ENCODE measurements at regions of chr5 and their contacts with region 1.

Region 1: DNA sequence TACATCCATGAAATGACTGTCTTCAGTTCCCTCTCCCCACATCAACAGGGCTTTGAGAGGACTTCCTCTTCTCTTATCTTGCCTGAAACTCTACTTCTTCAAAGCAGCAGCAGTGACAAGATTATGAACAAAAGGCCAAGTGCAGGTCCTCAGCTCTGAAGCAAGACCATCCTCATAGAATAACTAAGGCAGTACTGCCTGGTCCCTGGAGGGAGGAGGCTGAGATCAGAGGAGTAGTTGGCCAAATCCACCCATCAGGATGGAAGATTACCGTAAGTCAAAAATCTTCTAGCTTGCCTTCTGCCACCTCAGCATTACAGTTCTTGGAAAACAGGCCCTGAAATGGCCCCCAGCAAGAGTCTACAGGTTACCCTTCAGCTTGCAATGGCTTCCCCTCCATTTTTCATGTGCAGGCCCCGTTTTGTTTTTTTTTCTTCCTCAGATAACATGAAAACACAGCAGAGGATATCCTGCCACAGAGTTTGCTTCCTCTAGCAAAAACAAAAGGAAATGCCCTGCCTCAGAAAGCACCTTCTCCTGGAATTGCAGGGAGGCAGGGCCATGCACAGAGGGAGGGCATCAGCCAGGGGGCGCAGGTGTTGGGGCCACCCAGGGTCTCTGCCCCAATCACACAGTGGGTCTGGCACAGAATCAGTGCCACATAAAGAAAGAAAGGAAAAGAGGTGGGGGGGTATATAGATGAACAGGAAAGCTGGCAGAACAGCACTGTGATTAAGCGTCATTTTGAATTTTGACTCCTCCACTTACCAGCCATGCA is 40.0 kb downstream of the KLHL3 start:
- DNase-seq: no peak
- H3K4me3 ChIP-seq: no peak overlapping the region
- H3K27ac ChIP-seq: no peak overlapping the region
- H3K4me1 ChIP-seq: peaks cover 3% of the 10 kb centered on the region
- H3K27me3 ChIP-seq: no peaks in the 10 kb centered on the region
- CTCF ChIP-seq: no peak
- EP300 ChIP-seq: no peak
- POLR2A ChIP-seq: no peak

Region 2: DNA sequence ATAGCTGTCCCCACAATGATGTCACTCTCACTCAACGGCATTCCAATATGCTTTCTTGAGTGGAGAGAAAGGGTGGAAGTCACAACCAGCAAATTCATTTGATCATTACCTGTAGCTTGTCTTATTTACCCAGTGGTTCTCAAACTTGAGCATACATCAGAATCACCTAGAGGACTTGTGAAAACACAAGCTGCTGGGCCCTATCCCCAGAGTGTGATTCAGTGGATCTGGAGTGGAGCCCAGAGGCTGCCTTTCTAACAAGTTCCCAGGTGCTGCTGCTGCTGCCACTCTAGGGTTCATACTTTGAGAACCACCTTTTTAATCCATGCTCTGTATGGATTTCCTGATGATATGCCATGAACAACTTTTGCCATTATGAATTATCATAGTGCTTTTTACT is 54.7 kb before region 1 on chr5:
- intact Hi-C with region 1: no loop called
- DNase-seq: peak in 1 of 5 donors; percentile 21
- H3K4me3 ChIP-seq: no peak overlapping the region
- H3K27ac ChIP-seq: no peak overlapping the region
- H3K4me1 ChIP-seq: peaks cover 5% of the 10 kb centered on the region
- H3K27me3 ChIP-seq: no peaks in the 10 kb centered on the region
- CTCF ChIP-seq: no peak
- EP300 ChIP-seq: no peak
- POLR2A ChIP-seq: no peak

Region 3: GRCh38 chr5:137684761-137685160 is 11.1 kb before region 1 on chr5:
- intact Hi-C with region 1: loop called in 1 of 4 experiments (anchors 1 kb)
- DNase-seq: no peak
- H3K4me3 ChIP-seq: no peak overlapping the region
- H3K27ac ChIP-seq: no peak overlapping the region
- H3K4me1 ChIP-seq: no peaks in the 10 kb centered on the region
- H3K27me3 ChIP-seq: no peaks in the 10 kb centered on the region
- CTCF ChIP-seq: no peak
- EP300 ChIP-seq: no peak
- POLR2A ChIP-seq: no peak

Region 4: GRCh38 chr5:137735555-137736284 is 39.9 kb after region 1 on chr5 and contains the start of gene KLHL3:
- intact Hi-C with region 1: no loop called
- DNase-seq: peak; percentile 19 to 47 (median 41)
- H3K4me3 ChIP-seq: peak within 1 kb of the TSS; percentile 31
- H3K27ac ChIP-seq: no peak within 1 kb of the TSS
- H3K4me1 ChIP-seq: peaks cover 2% of the 10 kb centered on the region
- H3K27me3 ChIP-seq: no peaks in the 10 kb centered on the region
- CTCF ChIP-seq: no peak
- EP300 ChIP-seq: no peak
- POLR2A ChIP-seq: no peak
- total RNA-seq, gene KLHL3: 5.0 to 15.7 (median 8.7) TPM